GM13976 (cell line): ENCODE measurements at regions of chr2 and their contacts with region 1.

Region 1: DNA sequence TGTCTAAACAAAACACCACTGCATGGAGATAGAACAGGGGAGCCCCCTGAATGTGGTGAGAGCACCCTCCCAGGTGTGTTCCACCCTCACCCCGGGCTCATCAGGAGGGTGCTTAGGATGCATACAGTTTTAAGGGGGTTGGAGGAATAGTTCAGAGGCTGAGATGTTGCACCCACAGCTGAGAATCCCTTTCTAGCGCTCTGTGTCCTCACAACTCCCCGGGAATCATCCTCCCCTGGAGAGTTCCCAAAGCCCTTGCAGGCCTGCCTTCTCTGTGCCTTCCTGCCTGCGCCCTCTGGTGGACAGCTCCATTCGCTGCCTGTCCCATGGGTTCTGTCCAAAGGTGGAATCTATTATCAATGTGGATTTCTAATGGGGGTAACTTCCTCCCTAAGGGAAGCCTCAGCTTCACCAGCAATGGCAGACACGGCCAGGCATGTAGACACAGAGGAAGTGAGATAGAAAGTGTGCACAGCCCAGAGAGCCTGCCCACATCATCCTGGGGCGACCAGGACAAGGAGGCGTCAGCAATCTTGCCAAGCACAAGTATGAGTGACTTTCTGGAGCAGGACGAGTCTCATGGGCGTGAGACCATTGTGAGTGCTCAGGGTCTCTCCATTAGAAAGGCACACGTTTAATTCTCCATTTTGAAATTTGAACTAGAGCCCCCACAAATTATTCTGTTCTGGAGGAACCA is 1.2 kb upstream of the UGT1A5 start:
- DNase-seq: peak; percentile 64
- CTCF ChIP-seq: peak; percentile 86

Region 2: GRCh38 chr2:233288719-233289118 is 422.7 kb before region 1 on chr2:
- in situ Hi-C with region 1: loop called (anchors 25 kb)
- DNase-seq: no peak
- CTCF ChIP-seq: no peak

Region 3: GRCh38 chr2:233418761-233419625 is 292.5 kb before region 1 on chr2:
- in situ Hi-C with region 1: no loop called
- DNase-seq: peak; percentile 65
- CTCF ChIP-seq: no peak

Region 4: GRCh38 chr2:233470011-233470687 is 241.3 kb before region 1 on chr2:
- in situ Hi-C with region 1: loop called (anchors 25 kb)
- DNase-seq: no peak
- CTCF ChIP-seq: no peak